ENCODE measurements at regions of chr7 and their contacts with region 1.

Region 1: DNA sequence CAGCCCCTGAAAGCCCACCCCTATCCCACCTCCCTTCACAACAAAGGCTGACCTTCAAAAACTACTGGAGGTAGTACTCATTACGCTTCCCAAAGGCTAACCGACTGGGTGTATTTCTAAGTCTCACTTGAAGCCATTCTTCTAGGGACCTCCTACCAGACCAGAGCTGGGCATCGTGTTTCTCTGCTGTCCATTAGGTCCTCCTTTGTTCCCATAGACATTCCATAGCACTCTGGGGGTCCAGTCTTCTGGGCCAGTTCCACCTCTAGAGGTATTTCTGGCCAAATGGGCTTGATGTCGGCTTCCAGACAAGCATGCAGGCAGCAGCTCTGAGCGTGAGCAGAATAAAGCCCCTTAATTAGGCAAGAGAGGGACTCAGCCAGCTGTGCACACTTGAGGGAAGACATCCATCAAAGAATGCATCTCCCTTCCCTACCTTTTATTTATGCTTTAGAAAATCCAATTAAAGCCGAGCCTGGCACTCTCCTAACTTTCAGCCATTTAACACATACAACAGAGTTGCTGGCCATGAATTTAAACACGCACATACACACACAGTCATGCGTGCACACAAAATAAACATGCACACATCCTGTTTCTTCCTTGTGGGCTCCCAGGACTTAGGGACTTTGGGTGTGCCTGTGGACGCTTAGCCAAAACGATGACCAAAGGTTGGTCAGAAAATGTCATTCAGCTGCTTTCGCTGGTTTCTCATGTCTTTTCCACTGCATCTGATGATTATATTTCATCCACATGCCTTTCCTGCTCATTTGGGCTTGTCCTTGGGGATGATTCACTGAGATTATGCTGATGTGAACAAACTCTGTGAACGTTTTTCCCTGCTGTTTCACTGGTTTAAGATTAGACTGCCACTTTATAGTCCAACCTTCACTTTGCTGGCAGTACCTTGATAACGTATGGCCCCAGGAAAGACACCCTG is 362.0 kb upstream of the NFE2L3 start:
- DNase-seq: no peak
- ATAC-seq: no peak
- H3K4me3 ChIP-seq: no peak overlapping the region
- H3K27ac ChIP-seq: no peak overlapping the region
- H3K4me1 ChIP-seq: no peaks in the 10 kb centered on the region
- H3K27me3 ChIP-seq: no peaks in the 10 kb centered on the region
- CTCF ChIP-seq: no peak

Region 2: DNA sequence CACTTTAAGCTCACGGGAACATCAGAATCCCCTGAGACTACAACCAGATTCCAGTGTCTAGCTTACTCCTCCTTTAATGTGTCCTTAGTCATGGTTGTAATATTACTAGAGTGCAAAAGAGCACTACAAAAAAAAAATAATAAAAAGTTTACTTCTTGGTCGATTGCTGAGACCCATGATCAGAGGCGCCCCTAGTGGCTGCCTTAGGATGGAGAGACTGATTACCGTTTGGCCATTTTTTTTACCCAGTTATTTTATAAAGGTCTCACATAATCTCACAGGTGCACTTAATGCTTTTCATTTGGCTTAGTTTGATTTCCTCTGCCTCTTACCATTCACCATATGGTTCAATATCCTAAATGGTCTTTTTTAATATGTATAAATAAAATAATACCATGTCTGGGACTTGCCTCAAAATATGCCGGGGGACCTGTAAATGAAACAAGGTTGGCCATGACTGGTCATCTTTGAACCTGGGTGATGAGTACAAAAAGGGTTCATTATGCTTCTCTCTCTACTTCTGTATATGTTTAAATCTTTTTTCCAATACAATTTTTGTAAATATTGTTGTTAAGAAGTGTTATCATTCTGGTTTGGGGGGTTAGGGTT is 30.6 kb after region 1 on chr7:
- intact Hi-C with region 1: loop called in 1 of 2 experiments (anchors 5 kb)
- DNase-seq: no peak
- ATAC-seq: no peak
- H3K4me3 ChIP-seq: no peak overlapping the region
- H3K27ac ChIP-seq: no peak overlapping the region
- H3K4me1 ChIP-seq: no peaks in the 10 kb centered on the region
- H3K27me3 ChIP-seq: no peaks in the 10 kb centered on the region
- CTCF ChIP-seq: peak; percentile 27